Activated naive CD4-positive, alpha-beta T cell treated with anti-CD3 and anti-CD28 coated beads for 36 hours (primary cell): ENCODE measurements at regions of chr2 and their contacts with region 1.

Region 1: DNA sequence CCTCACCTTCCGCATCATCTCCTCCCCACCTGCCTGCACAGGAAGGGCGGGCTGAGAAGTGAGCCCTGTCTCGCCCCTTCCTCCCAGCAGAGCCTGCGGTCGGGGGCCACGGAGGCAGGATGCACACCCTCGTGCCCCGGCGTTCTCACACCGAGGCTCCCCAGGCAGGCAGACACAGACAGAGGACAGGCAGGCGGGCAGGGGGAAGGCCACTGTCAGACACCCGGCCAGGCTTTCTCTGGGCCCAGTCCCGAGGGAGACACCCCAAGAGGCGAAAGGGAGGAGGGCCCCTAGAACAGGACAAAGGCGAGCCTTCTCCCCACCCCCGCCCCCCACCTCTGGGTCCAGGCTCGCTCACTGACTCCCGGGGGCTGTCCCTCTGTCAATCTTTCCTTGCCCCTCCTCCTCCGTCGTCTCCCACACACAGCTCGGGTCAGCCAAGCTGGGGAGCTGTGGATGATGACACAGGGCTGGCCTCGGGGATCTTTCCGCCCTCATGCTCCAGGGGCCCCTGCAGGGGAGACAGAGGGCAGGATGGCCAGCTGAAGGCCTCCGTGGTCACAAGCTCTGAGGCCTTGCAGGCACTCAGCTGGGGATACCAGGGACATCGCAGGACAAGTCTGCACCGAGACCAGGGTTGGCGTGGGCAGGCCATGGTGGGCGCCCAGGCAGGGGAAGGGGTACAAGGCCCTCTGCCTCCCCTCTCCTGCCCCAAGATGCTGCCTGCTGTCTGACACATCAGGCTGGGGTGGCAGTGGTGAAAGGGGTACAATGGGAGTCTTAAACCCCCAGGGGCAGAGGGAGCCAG is 24.9 kb downstream of the BIN1 start:
- DNase-seq: peak; percentile 86
- H3K4me3 Mint-ChIP-seq: peak overlapping the region; percentile 82
- H3K27ac Mint-ChIP-seq: peak overlapping the region; percentile 91
- H3K4me1 Mint-ChIP-seq: peaks cover 74% of the 10 kb centered on the region
- H3K27me3 Mint-ChIP-seq: no peaks in the 10 kb centered on the region

Region 2: GRCh38 chr2:126657636-126658318 is 424.3 kb before region 1 on chr2:
- CTCF ChIA-PET with region 1: no interaction called
- intact Hi-C with region 1: loop called (anchors 1 kb)
- DNase-seq: peak; percentile 87
- H3K4me3 Mint-ChIP-seq: peak overlapping the region; percentile 100
- H3K27ac Mint-ChIP-seq: peak overlapping the region; percentile 100
- H3K4me1 Mint-ChIP-seq: peaks cover 61% of the 10 kb centered on the region
- H3K27me3 Mint-ChIP-seq: no peaks in the 10 kb centered on the region

Region 3: GRCh38 chr2:126797622-126798275 is 284.3 kb before region 1 on chr2:
- CTCF ChIA-PET with region 1: no interaction called
- intact Hi-C with region 1: no loop called
- DNase-seq: no peak
- H3K4me3 Mint-ChIP-seq: no peak overlapping the region
- H3K27ac Mint-ChIP-seq: no peak overlapping the region
- H3K4me1 Mint-ChIP-seq: no peaks in the 10 kb centered on the region
- H3K27me3 Mint-ChIP-seq: peaks cover 4% of the 10 kb centered on the region

Region 4: DNA sequence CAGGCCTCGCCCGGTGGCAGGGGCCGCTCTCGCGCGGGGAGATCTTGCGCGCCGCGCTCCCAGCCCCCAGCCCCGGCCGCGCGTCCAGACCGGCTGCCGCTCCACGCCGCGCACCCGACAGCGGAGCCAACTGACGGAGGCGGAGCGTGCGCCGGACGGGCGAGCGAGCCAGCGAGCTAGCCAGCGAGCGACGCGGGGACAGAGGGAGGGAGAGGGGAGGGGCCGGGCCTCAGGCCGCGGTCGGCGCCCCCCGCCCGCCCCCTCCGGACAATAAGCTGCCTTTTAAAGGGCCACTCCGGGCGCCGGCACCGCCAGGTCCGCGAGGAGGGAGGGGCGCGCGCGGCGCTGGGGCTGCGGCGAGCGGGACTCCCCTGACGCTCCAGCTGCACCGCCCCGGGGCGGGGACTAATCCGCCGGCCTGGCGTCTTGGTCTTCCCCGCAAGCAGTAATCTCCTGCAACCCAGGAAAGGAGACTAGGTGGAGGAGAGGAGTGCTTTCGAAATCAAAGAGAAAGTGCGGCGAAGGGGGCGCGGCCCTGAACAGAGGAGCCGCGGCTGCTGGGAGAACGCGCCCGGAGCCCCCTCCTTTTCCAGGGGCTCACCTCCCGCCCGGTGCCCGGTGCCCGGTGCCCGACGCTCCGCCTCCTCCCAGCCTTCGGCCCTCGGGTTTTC is 25.1 kb after region 1 on chr2 and contains the start of gene BIN1:
- CTCF ChIA-PET with region 1: no interaction called
- intact Hi-C with region 1: loop called (anchors 1 kb)
- DNase-seq: peak; percentile 83
- H3K4me3 Mint-ChIP-seq: peak within 1 kb of the TSS; percentile 72
- H3K27ac Mint-ChIP-seq: no peak within 1 kb of the TSS
- H3K4me1 Mint-ChIP-seq: peaks cover 3% of the 10 kb centered on the region
- H3K27me3 Mint-ChIP-seq: peaks cover 9% of the 10 kb centered on the region
- total RNA-seq, gene BIN1: 50.4 to 51.1 TPM

Region 5: DNA sequence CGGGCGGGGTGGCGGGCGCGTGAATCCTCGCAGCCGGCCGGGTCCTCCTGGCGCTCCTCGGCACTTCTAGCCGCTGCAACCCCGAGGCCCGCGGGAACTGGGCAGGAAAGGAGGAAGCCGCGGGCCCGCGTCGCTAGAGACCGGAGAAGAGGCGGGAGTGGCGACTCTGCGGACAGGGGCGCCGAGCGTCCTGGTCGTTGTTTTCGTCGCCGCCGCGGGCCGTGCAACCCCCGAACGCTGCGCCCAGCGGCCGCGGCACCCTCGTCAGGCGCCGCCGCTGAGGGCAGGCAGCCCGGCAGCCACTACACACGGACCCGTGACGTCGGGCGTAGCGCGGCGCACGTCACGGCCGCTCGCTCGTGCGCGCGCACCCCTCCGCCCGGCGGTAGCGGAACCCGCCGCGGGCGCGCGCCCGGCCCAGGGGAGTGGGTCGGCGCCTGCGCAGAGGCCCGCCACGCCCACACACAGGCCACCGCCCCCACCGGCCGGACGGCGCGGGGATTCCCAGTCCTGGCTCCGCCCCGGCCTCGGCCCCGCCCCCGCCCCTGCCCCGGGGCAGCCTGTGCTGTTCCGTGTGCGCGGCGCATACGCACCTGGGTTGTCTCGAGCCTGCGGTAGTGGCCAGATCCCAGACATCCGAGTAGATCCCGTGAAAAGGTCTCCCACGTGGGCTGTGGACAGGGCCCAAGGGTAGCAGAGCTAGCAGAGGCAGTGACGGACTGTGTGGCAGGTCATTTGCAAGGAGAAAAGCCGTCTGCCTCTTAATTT is 305.8 kb after region 1 on chr2 and contains the start of gene MAP3K2:
- CTCF ChIA-PET with region 1: no interaction called
- intact Hi-C with region 1: loop called (anchors 2 kb)
- DNase-seq: peak; percentile 92
- H3K4me3 Mint-ChIP-seq: peak within 1 kb of the TSS; percentile 85
- H3K27ac Mint-ChIP-seq: peak within 1 kb of the TSS; percentile 92
- H3K4me1 Mint-ChIP-seq: peaks cover 69% of the 10 kb centered on the region
- H3K27me3 Mint-ChIP-seq: no peaks in the 10 kb centered on the region
- total RNA-seq, gene MAP3K2: 27.1 to 27.4 TPM

Region 6: GRCh38 chr2:127640082-127641072 is 558.3 kb after region 1 on chr2:
- CTCF ChIA-PET with region 1: no interaction called
- intact Hi-C with region 1: loop called (anchors 5 kb)
- DNase-seq: peak; percentile 65
- H3K4me3 Mint-ChIP-seq: peak overlapping the region; percentile 65
- H3K27ac Mint-ChIP-seq: peak overlapping the region; percentile 71
- H3K4me1 Mint-ChIP-seq: peaks cover 54% of the 10 kb centered on the region
- H3K27me3 Mint-ChIP-seq: no peaks in the 10 kb centered on the region